ENCODE measurements at regions of chr6 and their contacts with region 1.

Region 1: DNA sequence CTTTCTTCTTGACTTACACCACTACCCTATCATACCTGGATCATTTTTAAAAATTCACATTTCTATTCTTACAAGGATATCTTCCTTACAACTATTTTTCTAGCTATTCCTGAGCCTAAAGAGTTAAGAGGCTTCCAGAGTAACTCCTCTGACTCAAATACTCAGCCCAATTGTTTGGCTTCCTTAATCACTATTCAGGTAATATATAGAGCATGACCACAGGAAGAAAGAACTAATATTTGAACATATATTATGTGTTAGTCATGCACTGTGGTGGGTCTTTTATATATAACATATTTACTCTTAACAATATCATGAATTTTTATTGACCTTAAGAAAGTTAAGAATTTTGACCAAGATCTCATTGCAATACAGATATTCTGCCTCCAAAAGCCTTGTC is 42.0 kb upstream of the ID4 start:
- DNase-seq: no peak
- H3K4me3 Mint-ChIP-seq: no peak overlapping the region
- H3K27ac Mint-ChIP-seq: peak overlapping the region; percentile 14
- H3K4me1 Mint-ChIP-seq: peaks cover 39% of the 10 kb centered on the region
- H3K27me3 Mint-ChIP-seq: no peaks in the 10 kb centered on the region
- CTCF ChIP-seq: no peak

Region 2: DNA sequence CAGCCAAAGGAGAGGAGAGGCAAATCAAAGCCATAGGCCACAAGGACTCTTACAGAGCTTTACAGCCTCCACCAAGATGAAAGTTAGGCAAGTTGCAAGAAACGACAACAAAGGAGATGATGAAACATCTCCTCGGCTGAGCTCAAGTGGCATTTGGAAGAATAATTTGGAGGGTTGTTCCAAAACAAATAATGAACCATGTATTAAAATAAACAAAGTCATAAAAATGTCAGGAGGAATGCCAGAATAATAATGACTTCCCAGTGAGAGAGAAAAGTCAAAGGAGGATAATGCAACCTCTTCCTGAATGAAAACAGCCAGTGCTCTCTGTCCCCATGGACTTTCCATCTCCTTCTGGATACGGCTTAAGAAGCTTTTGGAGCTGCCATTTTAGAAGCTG is 329.5 kb before region 1 on chr6:
- CTCF ChIA-PET with region 1: no interaction called
- intact Hi-C with region 1: loop called (anchors 10 kb)
- DNase-seq: no peak
- H3K4me3 Mint-ChIP-seq: no peak overlapping the region
- H3K27ac Mint-ChIP-seq: no peak overlapping the region
- H3K4me1 Mint-ChIP-seq: no peaks in the 10 kb centered on the region
- H3K27me3 Mint-ChIP-seq: no peaks in the 10 kb centered on the region
- CTCF ChIP-seq: no peak

Region 3: DNA sequence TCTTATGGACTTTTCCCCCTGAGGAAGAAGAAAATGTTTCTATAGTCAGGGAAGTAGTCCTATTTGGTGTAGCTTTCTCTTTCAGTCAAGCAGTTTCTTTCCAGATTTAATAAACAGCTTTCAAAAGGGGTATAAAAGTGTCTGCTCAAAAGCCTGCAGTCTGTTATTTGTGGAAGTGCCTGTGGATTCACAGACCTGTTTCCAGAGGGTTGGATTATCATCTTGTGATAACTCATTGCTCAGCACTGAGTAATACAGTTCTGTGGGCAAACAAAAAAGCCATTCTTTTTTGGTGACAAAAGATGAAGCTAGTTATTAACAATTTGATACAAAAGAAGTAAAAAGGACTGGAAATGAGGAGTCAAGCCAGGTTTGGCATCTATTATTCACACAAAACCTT is 316.2 kb before region 1 on chr6:
- CTCF ChIA-PET with region 1: no interaction called
- intact Hi-C with region 1: no loop called
- DNase-seq: no peak
- H3K4me3 Mint-ChIP-seq: no peak overlapping the region
- H3K27ac Mint-ChIP-seq: no peak overlapping the region
- H3K4me1 Mint-ChIP-seq: peaks cover 23% of the 10 kb centered on the region
- H3K27me3 Mint-ChIP-seq: no peaks in the 10 kb centered on the region
- CTCF ChIP-seq: no peak

Region 4: GRCh38 chr6:19643713-19644112 is 151.5 kb before region 1 on chr6:
- CTCF ChIA-PET with region 1: no interaction called
- intact Hi-C with region 1: no loop called
- DNase-seq: no peak
- H3K4me3 Mint-ChIP-seq: no peak overlapping the region
- H3K27ac Mint-ChIP-seq: no peak overlapping the region
- H3K4me1 Mint-ChIP-seq: no peaks in the 10 kb centered on the region
- H3K27me3 Mint-ChIP-seq: no peaks in the 10 kb centered on the region
- CTCF ChIP-seq: no peak

Region 5: GRCh38 chr6:20483897-20484497 is 688.8 kb after region 1 on chr6:
- CTCF ChIA-PET with region 1: no interaction called
- intact Hi-C with region 1: no loop called
- DNase-seq: no peak
- H3K4me3 Mint-ChIP-seq: no peak overlapping the region
- H3K27ac Mint-ChIP-seq: no peak overlapping the region
- H3K4me1 Mint-ChIP-seq: no peaks in the 10 kb centered on the region
- H3K27me3 Mint-ChIP-seq: no peaks in the 10 kb centered on the region
- CTCF ChIP-seq: no peak